SK-N-SH (cell line): ENCODE measurements at regions of chr16 and their contacts with region 1.

Region 1: GRCh38 chr16:62041401-62041800 is 5.2 kb upstream of the CDH8 start:
- DNase-seq: peak; percentile 43
- H3K4me3 ChIP-seq: no peak overlapping the region
- H3K27ac ChIP-seq: no peak overlapping the region
- H3K4me1 ChIP-seq: no peaks in the 10 kb centered on the region
- H3K27me3 ChIP-seq: peaks cover 13% of the 10 kb centered on the region; the same call in 1 of the 2 replicates
- CTCF ChIP-seq: peak; percentile 60
- EP300 ChIP-seq: no peak
- RAD21 ChIP-seq: peak; percentile 71

Region 2: GRCh38 chr16:62051942-62052341 is 10.5 kb after region 1 on chr16:
- CTCF ChIA-PET with region 1: interaction called, 13 read pairs
- POLR2A ChIA-PET with region 1: no interaction called
- DNase-seq: no peak
- H3K4me3 ChIP-seq: no peak overlapping the region
- H3K27ac ChIP-seq: no peak overlapping the region
- H3K4me1 ChIP-seq: no peaks in the 10 kb centered on the region; a peak in 1 of 4 replicates
- H3K27me3 ChIP-seq: no peaks in the 10 kb centered on the region
- CTCF ChIP-seq: no peak
- EP300 ChIP-seq: no peak
- RAD21 ChIP-seq: no peak